A673 (cell line): ENCODE measurements at regions of chr15 and their contacts with region 1.

Region 1: GRCh38 chr15:96838081-96838480 is 507.6 kb downstream of the NR2F2 start:
- DNase-seq: peak; percentile 95
- H3K4me3 ChIP-seq: no peak overlapping the region
- H3K27ac ChIP-seq: peak overlapping the region; percentile 99
- H3K4me1 ChIP-seq: peaks cover 36% of the 10 kb centered on the region
- H3K27me3 ChIP-seq: no peaks in the 10 kb centered on the region
- CTCF ChIP-seq: no peak

Region 2: DNA sequence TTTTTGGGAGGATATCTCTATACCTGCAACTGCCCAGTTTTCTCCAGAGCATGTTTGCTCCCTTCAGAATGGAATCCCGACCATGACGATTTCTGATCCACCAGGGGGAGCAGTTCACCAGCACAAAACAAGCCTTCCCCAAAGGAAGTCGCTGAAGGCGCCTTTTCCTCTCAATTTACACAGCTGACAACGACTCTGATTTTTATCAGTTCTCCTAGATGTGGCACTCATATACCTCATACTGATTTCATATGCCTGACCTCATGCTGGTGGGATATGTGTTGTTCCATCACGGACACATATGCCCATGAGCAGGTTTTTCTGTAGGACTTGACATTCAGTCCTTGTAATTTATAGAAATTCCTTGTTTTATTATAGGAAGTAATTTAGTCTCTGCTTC is 1578.6 kb before region 1 on chr15:
- CTCF ChIA-PET with region 1: no interaction called
- POLR2A ChIA-PET with region 1: no interaction called
- intact Hi-C with region 1: loop called (anchors 5 kb)
- DNase-seq: peak; percentile 89
- H3K4me3 ChIP-seq: no peak overlapping the region
- H3K27ac ChIP-seq: no peak overlapping the region
- H3K4me1 ChIP-seq: peaks cover 22% of the 10 kb centered on the region
- H3K27me3 ChIP-seq: no peaks in the 10 kb centered on the region
- CTCF ChIP-seq: peak; percentile 73

Region 3: DNA sequence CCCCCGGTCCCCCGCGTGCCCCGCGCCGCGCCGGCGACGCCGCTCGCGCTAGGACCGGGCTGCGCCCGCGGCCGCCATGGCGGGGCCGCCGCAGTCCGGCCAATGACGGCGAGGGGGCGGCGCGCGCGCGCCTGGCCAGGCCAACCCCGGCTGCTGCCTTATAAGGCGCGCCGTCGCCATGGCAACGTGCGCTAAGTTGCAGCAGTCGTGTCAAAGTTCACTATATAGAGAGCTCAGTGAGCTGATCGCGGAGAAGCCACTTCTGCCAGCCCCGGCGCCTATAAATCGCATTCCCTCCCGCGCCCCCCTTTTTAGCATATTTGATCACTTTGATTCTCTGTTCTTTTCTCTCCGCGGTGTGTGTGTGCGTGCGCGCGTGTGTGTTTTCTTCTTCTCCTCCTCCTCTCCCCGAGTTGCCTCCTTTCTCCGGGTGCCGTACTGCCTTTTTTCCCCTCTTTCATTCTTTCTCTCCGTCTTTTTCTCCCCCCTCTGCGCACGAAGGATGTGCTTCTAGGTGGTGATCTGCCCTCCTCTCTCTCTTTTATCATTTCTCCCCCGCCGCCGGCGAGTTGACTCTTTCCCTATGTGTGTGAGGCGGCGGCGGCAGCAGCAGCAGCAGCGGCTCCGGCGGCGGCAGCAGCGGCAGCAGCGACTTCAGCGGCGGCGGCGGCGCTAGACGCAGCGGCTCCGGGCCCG is 507.5 kb before region 1 on chr15 and contains the start of gene NR2F2:
- CTCF ChIA-PET with region 1: interaction called, 4 read pairs
- POLR2A ChIA-PET with region 1: interaction called, 13 read pairs
- intact Hi-C with region 1: loop called (anchors 2 kb)
- DNase-seq: peak; percentile 99
- H3K4me3 ChIP-seq: peak within 1 kb of the TSS; percentile 77
- H3K27ac ChIP-seq: peak within 1 kb of the TSS; percentile 97
- H3K4me1 ChIP-seq: peaks cover 23% of the 10 kb centered on the region
- H3K27me3 ChIP-seq: no peaks in the 10 kb centered on the region
- CTCF ChIP-seq: no peak
- total RNA-seq, gene NR2F2: 106 and 138 TPM in 2 replicates

Region 4: GRCh38 chr15:96606617-96607016 is 231.5 kb before region 1 on chr15:
- CTCF ChIA-PET with region 1: no interaction called
- POLR2A ChIA-PET with region 1: no interaction called
- intact Hi-C with region 1: loop called (anchors 5 kb)
- DNase-seq: no peak
- H3K4me3 ChIP-seq: no peak overlapping the region
- H3K27ac ChIP-seq: no peak overlapping the region
- H3K4me1 ChIP-seq: peaks cover 4% of the 10 kb centered on the region
- H3K27me3 ChIP-seq: no peaks in the 10 kb centered on the region
- CTCF ChIP-seq: no peak

Region 5: DNA sequence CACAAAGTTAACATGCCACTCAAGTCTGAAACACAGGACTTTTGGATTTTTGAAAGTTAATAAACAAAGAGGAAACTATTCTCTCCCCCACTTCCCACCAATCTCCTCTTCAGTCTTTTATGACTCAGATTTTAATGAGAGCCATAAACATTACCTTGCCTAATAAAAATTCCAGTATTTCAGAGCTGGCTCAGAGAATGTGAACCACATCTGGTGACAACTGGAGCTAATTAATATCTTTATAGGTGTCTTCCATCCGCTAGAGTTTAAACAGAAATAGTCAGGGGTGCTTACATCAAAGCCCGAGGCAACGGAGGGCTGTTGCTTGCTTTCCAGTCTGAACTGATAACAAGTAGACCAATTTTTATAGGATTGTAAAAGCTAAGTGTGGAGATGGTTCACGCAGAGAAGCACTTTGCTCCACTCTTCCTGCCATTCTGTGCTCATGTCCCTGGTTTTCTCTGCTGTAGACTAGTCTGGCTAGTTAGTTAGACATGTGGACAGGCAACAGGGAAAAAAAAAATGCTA is 144.0 kb before region 1 on chr15:
- CTCF ChIA-PET with region 1: no interaction called
- POLR2A ChIA-PET with region 1: interaction called, 10 read pairs
- intact Hi-C with region 1: loop called (anchors 2 kb)
- DNase-seq: peak; percentile 89
- H3K4me3 ChIP-seq: peak overlapping the region; percentile 3
- H3K27ac ChIP-seq: peak overlapping the region; percentile 72
- H3K4me1 ChIP-seq: peaks cover 56% of the 10 kb centered on the region
- H3K27me3 ChIP-seq: no peaks in the 10 kb centered on the region
- CTCF ChIP-seq: no peak

Region 6: GRCh38 chr15:96947296-96948229 is 109.5 kb after region 1 on chr15:
- CTCF ChIA-PET with region 1: no interaction called
- POLR2A ChIA-PET with region 1: no interaction called
- intact Hi-C with region 1: no loop called
- DNase-seq: peak; percentile 71
- H3K4me3 ChIP-seq: peak overlapping the region; percentile 48
- H3K27ac ChIP-seq: peak overlapping the region; percentile 52
- H3K4me1 ChIP-seq: peaks cover 28% of the 10 kb centered on the region
- H3K27me3 ChIP-seq: no peaks in the 10 kb centered on the region
- CTCF ChIP-seq: no peak

Region 7: DNA sequence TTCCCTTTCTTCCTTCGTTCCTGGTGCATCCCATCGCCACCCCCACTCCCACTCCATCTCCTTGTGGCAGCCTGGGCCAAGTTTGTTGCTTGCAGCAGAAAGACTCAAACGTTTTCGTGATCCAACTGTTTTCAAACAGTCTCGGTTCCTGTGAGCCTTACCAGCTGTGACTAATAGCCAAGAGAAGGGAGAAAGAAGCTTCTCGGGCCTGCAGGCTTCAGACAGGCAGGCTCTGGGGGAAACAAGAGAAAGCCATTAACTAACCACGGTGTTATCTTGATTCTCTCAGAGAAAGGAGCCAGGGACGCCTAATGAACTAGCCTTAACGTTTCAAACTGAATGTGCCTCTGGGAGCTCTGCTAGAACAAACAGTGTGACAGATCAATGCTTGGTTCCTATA is 234.5 kb after region 1 on chr15:
- CTCF ChIA-PET with region 1: no interaction called
- POLR2A ChIA-PET with region 1: interaction called, 12 read pairs
- intact Hi-C with region 1: loop called (anchors 1 kb)
- DNase-seq: no peak
- H3K4me3 ChIP-seq: no peak overlapping the region
- H3K27ac ChIP-seq: peak overlapping the region; percentile 72
- H3K4me1 ChIP-seq: peaks cover 56% of the 10 kb centered on the region
- H3K27me3 ChIP-seq: no peaks in the 10 kb centered on the region
- CTCF ChIP-seq: no peak

Region 8: GRCh38 chr15:97248376-97248775 is 410.3 kb after region 1 on chr15:
- CTCF ChIA-PET with region 1: interaction called, 14 read pairs
- POLR2A ChIA-PET with region 1: interaction called, 5 read pairs
- intact Hi-C with region 1: no loop called
- DNase-seq: no peak
- H3K4me3 ChIP-seq: no peak overlapping the region
- H3K27ac ChIP-seq: no peak overlapping the region
- H3K4me1 ChIP-seq: peaks cover 5% of the 10 kb centered on the region
- H3K27me3 ChIP-seq: no peaks in the 10 kb centered on the region
- CTCF ChIP-seq: no peak